ENCODE measurements at regions of chr4 and their contacts with region 1.

Region 1: GRCh38 chr4:98745366-98745765 is 87.0 kb upstream of the TSPAN5 start:
- DNase-seq: peak; percentile 42 to 44
- H3K4me3 ChIP-seq: no peak overlapping the region
- H3K4me3 Mint-ChIP-seq: no peak overlapping the region
- H3K27ac Mint-ChIP-seq: peak overlapping the region; percentile 31
- H3K4me1 ChIP-seq: peaks cover 37% of the 10 kb centered on the region
- H3K4me1 Mint-ChIP-seq: peaks cover 22% of the 10 kb centered on the region
- H3K27me3 ChIP-seq: no peaks in the 10 kb centered on the region
- H3K27me3 Mint-ChIP-seq: no peaks in the 10 kb centered on the region
- CTCF ChIP-seq: peak; percentile 8 to 18

Region 2: DNA sequence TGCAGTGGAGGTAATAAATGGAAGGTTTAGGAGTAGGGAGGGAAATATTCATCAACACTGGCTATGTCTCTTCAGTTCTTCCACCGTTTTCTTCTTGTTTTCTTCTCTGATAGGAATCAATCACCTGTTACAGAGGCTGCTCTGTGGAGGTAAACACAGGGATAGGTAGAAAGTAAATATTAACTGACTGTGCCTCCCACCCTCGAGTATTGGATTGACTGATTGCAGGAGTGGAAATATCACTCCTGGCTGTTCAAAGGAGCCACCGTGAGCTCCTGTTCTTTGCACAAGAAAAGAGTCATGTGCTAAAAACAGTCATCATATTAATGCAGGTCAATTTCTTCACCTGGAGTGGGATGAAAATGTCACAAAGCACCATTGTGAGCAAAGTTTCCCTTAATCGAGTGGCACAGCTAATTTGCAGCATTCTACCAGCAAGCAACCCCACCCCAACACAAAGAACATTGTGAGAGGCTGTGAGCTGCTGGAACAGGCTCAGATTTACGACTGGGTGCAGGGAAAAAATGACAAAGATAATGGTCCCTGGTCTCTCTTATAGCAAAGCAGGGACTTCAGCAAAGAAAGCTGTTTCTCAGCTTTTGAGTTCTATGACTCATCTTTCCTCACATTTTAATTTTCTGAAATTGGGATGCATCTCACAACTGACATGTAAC is 26.7 kb after region 1 on chr4:
- CTCF ChIA-PET with region 1: no interaction called
- POLR2A ChIA-PET with region 1: no interaction called
- intact Hi-C with region 1: loop called (anchors 1 kb)
- DNase-seq: peak in 1 of 2 experiments; percentile 25
- H3K4me3 ChIP-seq: no peak overlapping the region
- H3K4me3 Mint-ChIP-seq: peak overlapping the region; percentile 57
- H3K27ac Mint-ChIP-seq: peak overlapping the region; percentile 81
- H3K4me1 ChIP-seq: peaks cover 12% of the 10 kb centered on the region
- H3K4me1 Mint-ChIP-seq: peaks cover 24% of the 10 kb centered on the region
- H3K27me3 ChIP-seq: no peaks in the 10 kb centered on the region
- H3K27me3 Mint-ChIP-seq: no peaks in the 10 kb centered on the region
- CTCF ChIP-seq: no peak

Region 3: GRCh38 chr4:98801259-98801725 is 55.9 kb after region 1 on chr4:
- CTCF ChIA-PET with region 1: no interaction called
- POLR2A ChIA-PET with region 1: interaction called, 6 read pairs
- intact Hi-C with region 1: loop called (anchors 1 kb)
- DNase-seq: peak; percentile 78 to 88
- H3K4me3 ChIP-seq: no peak overlapping the region
- H3K4me3 Mint-ChIP-seq: peak overlapping the region; percentile 69
- H3K27ac Mint-ChIP-seq: peak overlapping the region; percentile 92
- H3K4me1 ChIP-seq: peaks cover 50% of the 10 kb centered on the region
- H3K4me1 Mint-ChIP-seq: peaks cover 39% of the 10 kb centered on the region
- H3K27me3 ChIP-seq: no peaks in the 10 kb centered on the region
- H3K27me3 Mint-ChIP-seq: no peaks in the 10 kb centered on the region
- CTCF ChIP-seq: no peak

Region 4: GRCh38 chr4:98828801-98829200 is 83.4 kb after region 1 on chr4:
- CTCF ChIA-PET with region 1: no interaction called
- POLR2A ChIA-PET with region 1: no interaction called
- intact Hi-C with region 1: loop called (anchors 1 kb)
- DNase-seq: peak; percentile 40 to 41
- H3K4me3 ChIP-seq: no peak overlapping the region
- H3K4me3 Mint-ChIP-seq: no peak overlapping the region
- H3K27ac Mint-ChIP-seq: no peak overlapping the region
- H3K4me1 ChIP-seq: peaks cover 21% of the 10 kb centered on the region
- H3K4me1 Mint-ChIP-seq: peaks cover 28% of the 10 kb centered on the region
- H3K27me3 ChIP-seq: no peaks in the 10 kb centered on the region
- H3K27me3 Mint-ChIP-seq: no peaks in the 10 kb centered on the region
- CTCF ChIP-seq: no peak

Region 5: DNA sequence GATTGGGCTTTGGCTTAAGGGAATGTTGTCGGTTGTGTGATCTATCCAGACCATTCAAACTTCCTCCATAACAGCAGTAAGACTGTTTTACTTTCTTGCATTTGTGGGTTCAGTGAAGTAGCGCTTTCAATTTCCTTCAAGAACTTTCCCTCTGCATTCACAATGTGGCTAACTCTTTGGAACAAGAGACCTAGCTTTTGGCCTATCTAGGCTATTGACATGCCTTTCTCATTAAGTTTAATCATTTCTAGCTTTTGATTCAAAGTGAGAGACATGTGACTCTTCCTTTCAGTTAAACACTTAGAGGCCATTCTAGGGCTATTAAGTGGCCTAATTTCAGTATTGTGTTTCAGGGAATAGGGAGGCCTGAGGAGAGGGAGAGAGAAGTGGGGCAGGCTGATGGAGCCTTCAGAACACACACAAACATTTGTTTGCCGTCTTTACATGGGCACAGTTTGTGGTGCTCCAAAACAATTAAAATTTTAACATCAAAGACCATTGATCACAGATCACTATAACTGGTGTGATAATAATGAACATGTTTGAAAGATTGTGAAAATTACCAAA is 309.1 kb after region 1 on chr4:
- CTCF ChIA-PET with region 1: no interaction called
- POLR2A ChIA-PET with region 1: no interaction called
- intact Hi-C with region 1: loop called (anchors 1 kb)
- DNase-seq: no peak
- H3K4me3 ChIP-seq: no peak overlapping the region
- H3K4me3 Mint-ChIP-seq: no peak overlapping the region
- H3K27ac Mint-ChIP-seq: peak overlapping the region; percentile 69
- H3K4me1 ChIP-seq: peaks cover 6% of the 10 kb centered on the region; the same call in 1 of the 2 replicates
- H3K4me1 Mint-ChIP-seq: peaks cover 8% of the 10 kb centered on the region
- H3K27me3 ChIP-seq: no peaks in the 10 kb centered on the region
- H3K27me3 Mint-ChIP-seq: no peaks in the 10 kb centered on the region
- CTCF ChIP-seq: no peak

Measured in Caco-2 (cell line).